Esophagus muscularis mucosa (tissue), 4 donors: ENCODE measurements at regions of chr19 and their contacts with region 1.

Region 1: GRCh38 chr19:43463381-43464136 is 1.8 kb downstream of the LYPD3 start:
- DNase-seq: peak; percentile 99
- H3K4me3 ChIP-seq: peak overlapping the region; percentile 67 to 79 (median 72)
- H3K27ac ChIP-seq: peak overlapping the region; percentile 89 to 94 (median 90)
- H3K4me1 ChIP-seq: peaks cover 6 to 30% (median 25%) of the 10 kb centered on the region in 4 donors
- H3K27me3 ChIP-seq: no peaks in the 10 kb centered on the region
- CTCF ChIP-seq: no peak
- EP300 ChIP-seq: no peak
- POLR2A ChIP-seq: no peak

Region 2: DNA sequence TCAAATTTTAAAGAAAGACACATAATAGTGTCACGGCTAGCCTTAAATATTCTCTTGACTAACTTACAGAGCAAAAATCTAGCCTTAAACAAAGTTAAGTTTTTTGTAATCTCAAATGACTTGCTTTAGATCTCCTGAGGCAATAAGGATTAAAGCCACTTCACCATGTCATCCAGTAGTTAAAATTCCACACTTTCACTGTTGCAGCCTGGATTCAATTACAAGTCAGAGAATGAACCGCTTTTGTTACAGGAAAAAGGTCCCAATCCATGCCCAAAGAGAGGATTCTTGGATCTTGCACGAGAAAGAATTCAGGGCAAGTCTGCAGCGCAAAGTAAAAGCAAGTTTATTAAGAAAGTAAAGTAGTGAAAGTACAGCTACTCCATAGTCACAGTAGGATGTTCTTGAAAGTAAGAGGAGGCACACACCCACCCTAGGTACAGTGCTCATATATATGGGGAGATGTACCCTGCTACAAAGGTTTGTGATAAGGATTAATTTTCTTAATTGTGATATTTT is 144.7 kb before region 1 on chr19:
- intact Hi-C with region 1: no loop called
- DNase-seq: no peak
- H3K4me3 ChIP-seq: no peak overlapping the region
- H3K27ac ChIP-seq: no peak overlapping the region
- H3K4me1 ChIP-seq: no peaks in the 10 kb centered on the region
- H3K27me3 ChIP-seq: peaks cover 0 to 9% (median 0%) of the 10 kb centered on the region in 4 donors
- CTCF ChIP-seq: no peak
- EP300 ChIP-seq: no peak
- POLR2A ChIP-seq: no peak

Region 3: GRCh38 chr19:43503501-43504425 is 40.2 kb after region 1 on chr19:
- intact Hi-C with region 1: loop called (anchors 5 kb)
- DNase-seq: peak; percentile 99
- H3K4me3 ChIP-seq: peak overlapping the region; percentile 70 to 82 (median 76)
- H3K27ac ChIP-seq: peak overlapping the region; percentile 88 to 96 (median 92)
- H3K4me1 ChIP-seq: peaks cover 14 to 34% (median 29%) of the 10 kb centered on the region in 4 donors
- H3K27me3 ChIP-seq: no peaks in the 10 kb centered on the region
- CTCF ChIP-seq: peak in 2 of 3 experiments; percentile 27 to 42
- EP300 ChIP-seq: no peak
- POLR2A ChIP-seq: no peak